ENCODE measurements at regions of chr7 and their contacts with region 1.

Region 1: DNA sequence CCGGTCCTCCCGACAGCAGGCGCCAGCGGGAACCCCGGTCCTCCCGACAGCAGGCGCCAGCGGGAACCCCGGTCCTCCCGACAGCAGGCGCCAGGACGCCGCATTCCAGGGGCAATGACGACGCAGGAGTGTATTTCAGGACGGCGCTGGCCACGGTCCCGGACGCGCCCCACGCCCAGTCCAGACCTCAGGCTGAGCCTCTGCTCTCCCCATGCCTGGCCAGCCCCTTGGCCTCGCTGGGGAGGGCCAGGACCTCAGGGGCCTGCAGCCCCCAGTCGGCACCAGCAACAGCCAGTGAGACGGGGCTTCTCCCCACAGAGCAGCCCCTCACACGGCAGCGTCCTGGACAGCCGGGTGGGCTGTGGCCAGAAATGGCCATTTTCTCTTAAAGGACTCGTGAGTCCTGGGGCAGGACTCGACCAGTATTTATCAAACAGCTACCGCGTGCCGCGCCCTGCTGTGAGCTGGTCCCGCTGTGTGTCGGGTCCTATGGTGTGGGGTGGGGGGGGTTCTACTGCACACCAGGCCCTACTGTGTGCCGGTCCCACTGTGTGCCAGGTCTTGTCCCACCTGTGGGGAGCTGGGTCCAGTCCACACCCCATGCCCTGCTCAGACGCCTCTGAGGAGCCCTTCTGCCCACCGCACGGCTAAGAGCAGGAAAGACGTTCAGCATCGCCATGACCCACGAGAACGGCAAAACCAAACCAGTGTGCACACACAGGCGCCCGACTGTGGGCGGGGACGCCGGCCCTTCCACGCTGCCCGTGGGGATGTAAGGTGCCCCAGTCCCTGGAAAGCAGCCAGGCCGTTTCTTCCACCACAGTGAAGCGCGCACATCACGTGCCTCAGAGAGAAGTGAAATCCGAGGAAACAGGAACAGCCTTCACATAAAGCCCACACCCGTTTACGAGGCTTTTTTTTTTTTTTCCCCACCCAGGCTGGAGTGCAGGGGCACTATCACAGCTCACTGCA is 33.3 kb downstream of the GET4 start:
- DNase-seq: no peak
- H3K4me3 Mint-ChIP-seq: no peak overlapping the region
- H3K27ac Mint-ChIP-seq: no peak overlapping the region
- H3K4me1 Mint-ChIP-seq: no peaks in the 10 kb centered on the region
- H3K27me3 Mint-ChIP-seq: peaks cover 5% of the 10 kb centered on the region

Region 2: GRCh38 chr7:954330-955238 is 44.9 kb after region 1 on chr7 and contains the start of gene ADAP1:
- intact Hi-C with region 1: loop called (anchors 1 kb)
- DNase-seq: peak; percentile 41
- H3K4me3 Mint-ChIP-seq: peak within 1 kb of the TSS; percentile 84
- H3K27ac Mint-ChIP-seq: peak within 1 kb of the TSS; percentile 7
- H3K4me1 Mint-ChIP-seq: no peaks in the 10 kb centered on the region
- H3K27me3 Mint-ChIP-seq: peaks cover 7% of the 10 kb centered on the region
- total RNA-seq, gene ADAP1: 80.9 and 87.7 TPM in 2 replicates

Region 3: DNA sequence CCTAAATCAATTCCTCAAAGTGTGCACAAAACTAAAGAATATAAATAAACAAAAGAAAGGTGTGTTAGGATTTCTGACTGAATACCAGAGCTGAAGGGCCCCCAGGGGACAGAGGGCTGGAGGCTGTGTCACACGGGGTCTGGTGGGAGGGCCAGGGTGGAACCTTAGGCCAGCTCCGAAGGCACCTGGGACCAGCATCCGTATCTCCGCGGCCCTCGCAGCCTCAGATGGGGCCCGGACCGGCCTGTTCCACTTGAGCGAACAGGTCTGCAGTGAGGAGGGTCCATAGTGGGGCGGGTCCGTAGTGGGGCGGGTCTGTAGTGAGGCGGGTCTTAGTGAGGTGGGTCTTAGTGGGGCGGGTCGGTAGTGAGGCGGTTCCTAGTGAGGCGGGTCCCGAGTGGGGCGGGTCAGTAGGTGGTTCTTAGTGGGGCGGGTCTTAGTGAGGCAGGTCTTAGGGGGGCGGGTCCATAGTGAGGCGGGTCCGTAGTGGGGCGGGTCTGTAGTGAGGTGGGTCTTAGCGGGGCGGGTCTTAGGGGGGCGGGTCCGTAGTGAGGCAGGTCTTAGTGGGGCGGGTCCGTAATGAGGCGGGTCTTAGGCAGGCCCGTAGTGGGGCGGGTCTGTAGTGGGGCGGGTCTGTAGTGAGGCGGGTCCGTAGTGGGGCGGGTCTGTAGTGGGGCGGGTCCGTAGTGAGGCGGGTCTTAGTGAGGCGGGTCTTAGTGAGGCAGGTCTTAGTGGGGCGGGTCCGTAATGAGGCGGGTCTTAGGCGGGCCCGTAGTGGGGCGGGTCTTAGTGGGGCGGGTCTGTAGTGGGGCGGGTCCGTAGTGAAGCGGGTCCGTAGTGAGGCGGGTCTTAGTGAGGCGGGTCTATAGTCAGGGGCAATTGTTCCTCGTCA is 149.8 kb after region 1 on chr7:
- intact Hi-C with region 1: no loop called
- DNase-seq: no peak
- H3K4me3 Mint-ChIP-seq: no peak overlapping the region
- H3K27ac Mint-ChIP-seq: no peak overlapping the region
- H3K4me1 Mint-ChIP-seq: peaks cover 8% of the 10 kb centered on the region
- H3K27me3 Mint-ChIP-seq: no peaks in the 10 kb centered on the region